BJ (cell line): ENCODE measurements at regions of chr4 and their contacts with region 1.

Region 1: GRCh38 chr4:151917145-151917734 is 156.4 kb upstream of the GATB start:
- DNase-seq: no peak
- H3K4me3 ChIP-seq: no peak overlapping the region
- H3K27me3 ChIP-seq: no peaks in the 10 kb centered on the region
- CTCF ChIP-seq: no peak

Region 2: GRCh38 chr4:151905197-151905596 is 12.0 kb before region 1 on chr4:
- CTCF ChIA-PET with region 1: interaction called, 3 read pairs
- POLR2A ChIA-PET with region 1: interaction called, 18 read pairs
- DNase-seq: no peak
- H3K4me3 ChIP-seq: no peak overlapping the region
- H3K27me3 ChIP-seq: no peaks in the 10 kb centered on the region
- CTCF ChIP-seq: no peak